ENCODE measurements at regions of chr1 and their contacts with region 1.

Region 1: DNA sequence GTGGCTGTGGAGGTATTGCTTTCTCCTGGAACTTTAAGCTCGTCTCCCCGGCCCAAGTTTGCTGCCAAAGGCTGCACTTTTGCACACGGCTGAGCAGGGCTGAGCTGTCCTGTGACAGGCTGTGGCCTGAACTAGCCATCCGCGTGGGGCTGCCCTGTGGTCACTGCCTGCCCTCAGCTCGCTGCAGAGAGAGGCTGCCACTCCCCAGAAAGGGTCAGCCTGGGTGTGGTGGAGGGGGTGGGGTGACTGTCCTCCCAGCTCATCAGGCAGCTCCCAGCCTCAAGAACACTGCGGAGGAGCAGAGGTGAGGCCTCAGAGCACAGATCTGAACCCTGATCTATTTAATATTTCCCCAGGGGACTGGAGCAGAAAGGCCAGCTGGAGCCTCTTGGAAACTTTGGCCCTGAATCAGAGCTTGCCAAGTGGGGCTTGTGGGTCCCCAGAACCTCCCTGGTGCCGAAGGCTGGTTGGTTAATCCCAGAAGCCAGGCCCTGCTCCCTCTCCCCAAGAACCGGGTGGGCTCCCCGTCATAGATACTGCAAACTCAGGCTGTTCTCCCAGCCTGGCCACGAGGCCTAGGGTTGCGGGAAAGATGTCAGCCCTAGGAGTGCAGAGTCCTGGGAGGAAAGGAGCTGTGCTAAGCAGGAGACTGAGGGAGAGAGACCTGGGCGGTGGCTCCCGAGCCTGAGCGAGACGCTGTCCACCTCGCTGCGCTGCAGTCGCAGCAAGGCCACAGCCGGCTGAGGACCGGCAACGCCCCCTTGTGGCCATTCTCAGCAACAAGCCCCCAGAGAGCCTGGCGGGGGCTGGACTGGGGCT is 125.1 kb upstream of the IPO9 start:
- DNase-seq: no peak
- H3K4me3 ChIP-seq: no peak overlapping the region
- H3K27ac ChIP-seq: peak overlapping the region; percentile 52
- H3K27me3 ChIP-seq: no peaks in the 10 kb centered on the region
- CTCF ChIP-seq: peak; percentile 93

Region 2: DNA sequence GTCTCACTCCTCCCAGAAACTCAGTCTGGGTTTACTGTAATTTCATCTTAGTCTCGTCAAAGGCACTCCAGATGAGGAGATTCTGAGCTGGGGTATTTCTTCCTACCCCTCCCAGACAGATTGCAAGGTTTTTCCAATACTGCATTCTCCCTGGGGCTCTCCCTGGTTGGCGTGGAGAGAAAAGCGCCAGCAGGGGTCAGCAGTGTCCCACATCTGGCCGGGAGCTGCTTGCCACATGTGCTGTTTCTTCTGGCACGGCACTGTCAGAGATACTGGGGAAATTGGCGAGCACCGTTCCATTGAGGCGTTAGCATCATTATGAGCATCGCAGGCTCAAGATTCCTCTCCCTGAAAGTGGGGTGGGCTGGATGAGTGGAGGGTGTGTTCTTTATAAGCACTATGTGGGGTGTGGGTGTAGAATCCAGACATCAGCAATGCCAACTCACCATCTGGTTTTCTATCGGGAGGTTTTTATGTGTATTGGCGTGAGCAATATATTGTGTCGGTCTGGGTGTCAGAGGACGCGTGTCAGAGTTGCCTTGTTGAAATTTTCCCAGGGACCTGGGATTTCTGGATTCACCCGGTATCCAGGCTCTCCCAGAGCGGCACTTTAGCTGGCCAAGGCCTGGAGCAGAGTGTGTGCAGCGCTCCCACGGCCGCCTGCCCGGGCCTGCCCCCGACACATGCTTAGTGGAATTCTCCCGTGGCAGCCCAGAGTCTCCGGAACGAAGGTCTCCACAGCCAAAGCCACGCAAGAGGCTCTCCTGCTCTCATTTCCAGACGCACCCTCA is 172.9 kb before region 1 on chr1:
- CTCF ChIA-PET with region 1: interaction called, 33 read pairs
- POLR2A ChIA-PET with region 1: no interaction called
- DNase-seq: no peak
- H3K4me3 ChIP-seq: no peak overlapping the region
- H3K27ac ChIP-seq: peak overlapping the region; percentile 31
- H3K27me3 ChIP-seq: no peaks in the 10 kb centered on the region
- CTCF ChIP-seq: peak; percentile 92

Region 3: GRCh38 chr1:201536543-201536942 is 167.3 kb before region 1 on chr1:
- CTCF ChIA-PET with region 1: interaction called, 33 read pairs
- POLR2A ChIA-PET with region 1: no interaction called
- DNase-seq: no peak
- H3K4me3 ChIP-seq: peak overlapping the region; percentile 29
- H3K27ac ChIP-seq: peak overlapping the region; percentile 22
- H3K27me3 ChIP-seq: no peaks in the 10 kb centered on the region
- CTCF ChIP-seq: no peak

Region 4: GRCh38 chr1:201649761-201650622 is 53.8 kb before region 1 on chr1:
- CTCF ChIA-PET with region 1: interaction called, 10 read pairs
- POLR2A ChIA-PET with region 1: interaction called, 4 read pairs
- DNase-seq: no peak
- H3K4me3 ChIP-seq: peak overlapping the region; percentile 91
- H3K27ac ChIP-seq: peak overlapping the region; percentile 73
- H3K27me3 ChIP-seq: no peaks in the 10 kb centered on the region
- CTCF ChIP-seq: peak; percentile 21; the same call in 1 of the 2 replicates